K562 (cell line): ENCODE measurements at regions of chr5 and their contacts with region 1.

Region 1: GRCh38 chr5:132456296-132457001 is 34.1 kb downstream of the IRF1 start:
- DNase-seq: no peak
- ATAC-seq: no peak
- H3K4me3 ChIP-seq: no peak overlapping the region
- H3K27ac ChIP-seq: no peak overlapping the region
- H3K4me1 ChIP-seq: peaks cover 16 to 42% of the 10 kb centered on the region in 2 experiments
- H3K27me3 ChIP-seq: no peaks in the 10 kb centered on the region
- CTCF ChIP-seq: no peak
- EP300 ChIP-seq: no peak
- POLR2A ChIP-seq: no peak
- RAD21 ChIP-seq: no peak

Region 2: DNA sequence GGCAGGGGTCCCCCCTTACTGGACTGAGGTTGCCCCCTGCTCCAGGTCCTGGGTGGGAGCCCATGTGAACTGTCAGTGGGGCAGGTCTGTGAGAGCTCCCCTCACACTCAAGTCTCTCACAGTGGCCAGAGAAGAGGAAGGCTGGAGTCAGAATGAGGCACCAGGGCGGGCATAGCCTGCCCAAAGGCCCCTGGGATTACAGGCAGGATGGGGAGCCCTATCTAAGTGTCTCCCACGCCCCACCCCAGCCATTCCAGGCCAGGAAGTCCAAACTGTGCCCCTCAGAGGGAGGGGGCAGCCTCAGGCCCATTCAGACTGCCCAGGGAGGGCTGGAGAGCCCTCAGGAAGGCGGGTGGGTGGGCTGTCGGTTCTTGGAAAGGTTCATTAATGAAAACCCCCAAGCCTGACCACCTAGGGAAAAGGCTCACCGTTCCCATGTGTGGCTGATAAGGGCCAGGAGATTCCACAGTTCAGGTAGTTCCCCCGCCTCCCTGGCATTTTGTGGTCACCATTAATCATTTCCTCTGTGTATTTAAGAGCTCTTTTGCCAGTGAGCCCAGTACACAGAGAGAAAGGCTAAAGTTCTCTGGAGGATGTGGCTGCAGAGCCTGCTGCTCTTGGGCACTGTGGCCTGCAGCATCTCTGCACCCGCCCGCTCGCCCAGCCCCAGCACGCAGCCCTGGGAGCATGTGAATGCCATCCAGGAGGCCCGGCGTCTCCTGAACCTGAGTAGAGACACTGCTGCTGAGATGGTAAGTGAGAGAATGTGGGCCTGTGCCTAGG is 383.0 kb before region 1 on chr5 and contains the start of gene CSF2:
- CTCF ChIA-PET with region 1: no interaction called
- POLR2A ChIA-PET with region 1: no interaction called
- in situ Hi-C with region 1: no loop called
- intact Hi-C with region 1: no loop called
- DNase-seq: no peak
- ATAC-seq: no peak
- H3K4me3 ChIP-seq: no peak within 1 kb of the TSS
- H3K27ac ChIP-seq: no peak within 1 kb of the TSS
- H3K4me1 ChIP-seq: peaks cover 28 to 58% of the 10 kb centered on the region in 2 experiments
- H3K27me3 ChIP-seq: no peaks in the 10 kb centered on the region
- CTCF ChIP-seq: no peak
- EP300 ChIP-seq: no peak
- POLR2A ChIP-seq: no peak
- RAD21 ChIP-seq: no peak
- polyA plus RNA-seq, gene CSF2: not detected

Region 3: DNA sequence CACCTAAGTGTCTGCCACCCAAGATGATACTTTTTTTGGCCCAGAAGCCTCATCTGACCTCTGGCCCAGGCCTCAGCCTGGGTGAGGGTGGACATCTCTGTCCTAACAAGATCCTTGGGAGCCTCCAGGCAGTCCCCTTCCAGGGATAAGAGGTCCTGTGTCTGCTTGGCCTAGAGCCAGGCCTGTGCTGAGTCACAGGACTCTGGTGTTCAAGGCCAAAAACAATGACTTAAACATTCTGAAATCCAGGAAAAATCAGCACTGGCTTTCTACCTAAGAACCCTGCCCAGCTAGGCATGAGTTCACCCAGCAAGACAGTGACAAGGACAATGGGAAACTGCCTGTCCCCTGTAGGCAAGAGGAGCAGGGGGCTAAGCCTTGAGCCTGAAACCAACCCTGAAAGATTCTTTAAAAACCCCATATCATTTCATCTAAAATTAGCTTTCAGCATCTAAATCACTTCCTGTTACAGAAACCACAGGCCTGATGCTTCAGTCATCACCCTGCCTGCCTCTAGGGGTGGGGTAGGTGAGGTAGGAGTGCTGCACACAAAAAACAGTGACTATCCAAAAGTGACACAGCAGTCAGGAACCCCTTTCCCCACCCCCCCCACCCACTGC is 353.0 kb before region 1 on chr5:
- CTCF ChIA-PET with region 1: no interaction called
- POLR2A ChIA-PET with region 1: no interaction called
- in situ Hi-C with region 1: no loop called
- intact Hi-C with region 1: no loop called
- DNase-seq: peak; percentile 75 to 89 (median 83)
- ATAC-seq: peak; percentile 88
- H3K4me3 ChIP-seq: no peak overlapping the region
- H3K27ac ChIP-seq: peak overlapping the region; percentile 75; the same call in 2 of the 3 replicates
- H3K4me1 ChIP-seq: peaks cover 28 to 57% of the 10 kb centered on the region in 2 experiments
- H3K27me3 ChIP-seq: no peaks in the 10 kb centered on the region
- CTCF ChIP-seq: 0 out of 6 replicates have a peak, but pooled peaks of 1 of the 3 experiments have one; percentile 6
- EP300 ChIP-seq: peak; percentile 73
- POLR2A ChIP-seq: no peak
- RAD21 ChIP-seq: 0 out of 4 replicates have a peak, but pooled peaks of 1 of the 2 experiments have one; percentile 5

Region 4: DNA sequence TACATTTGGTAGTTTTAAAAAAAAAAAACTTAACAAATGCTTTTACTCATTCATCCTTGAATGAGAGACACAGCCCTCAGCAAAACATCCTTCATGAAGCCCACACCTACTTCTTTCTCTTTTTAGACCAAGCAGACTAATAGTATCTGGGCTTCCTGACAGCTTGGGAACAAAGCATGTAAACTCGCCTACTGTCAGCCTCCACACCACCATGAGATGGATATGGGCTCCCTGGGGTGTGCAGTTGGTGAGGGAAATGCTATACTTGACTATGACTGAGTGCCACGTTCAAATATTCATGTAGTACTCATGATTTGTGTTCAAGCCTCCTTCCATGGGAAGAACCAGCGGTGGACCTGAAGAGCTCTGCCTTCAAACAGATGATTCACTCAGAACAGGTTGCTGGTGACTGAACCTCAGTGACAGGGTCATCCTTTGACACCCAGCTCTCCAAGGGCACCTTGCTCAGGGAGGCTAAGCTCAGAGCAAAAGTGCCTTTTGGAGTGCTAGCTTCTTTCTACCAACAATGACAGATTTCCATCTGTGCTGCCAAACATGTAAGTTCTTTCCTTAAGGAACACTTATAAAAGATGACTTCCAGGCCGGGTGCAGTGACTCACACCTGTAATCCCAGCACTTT is 50.2 kb before region 1 on chr5:
- CTCF ChIA-PET with region 1: no interaction called
- POLR2A ChIA-PET with region 1: no interaction called
- in situ Hi-C with region 1: no loop called
- intact Hi-C with region 1: no loop called
- DNase-seq: no peak
- ATAC-seq: no peak
- H3K4me3 ChIP-seq: no peak overlapping the region
- H3K27ac ChIP-seq: no peak overlapping the region
- H3K4me1 ChIP-seq: peaks cover 10 to 12% of the 10 kb centered on the region in 2 experiments; a peak in 4 of 5 replicates
- H3K27me3 ChIP-seq: no peaks in the 10 kb centered on the region
- CTCF ChIP-seq: no peak
- EP300 ChIP-seq: no peak
- POLR2A ChIP-seq: no peak
- RAD21 ChIP-seq: no peak

Region 5: GRCh38 chr5:132419502-132420468 is 36.7 kb before region 1 on chr5:
- CTCF ChIA-PET with region 1: interaction called, 3 read pairs
- POLR2A ChIA-PET with region 1: no interaction called
- in situ Hi-C with region 1: loop called (anchors 5 kb)
- intact Hi-C with region 1: no loop called
- DNase-seq: peak; percentile 85 to 89 (median 88)
- ATAC-seq: peak; percentile 81
- H3K4me3 ChIP-seq: no peak overlapping the region
- H3K27ac ChIP-seq: peak overlapping the region; percentile 42; the same call in 2 of the 3 replicates
- H3K4me1 ChIP-seq: peaks cover 22 to 50% of the 10 kb centered on the region in 2 experiments
- H3K27me3 ChIP-seq: no peaks in the 10 kb centered on the region
- CTCF ChIP-seq: peak; percentile 89 to 95 (median 90)
- EP300 ChIP-seq: peak; percentile 8; the same call in 1 of the 2 replicates
- POLR2A ChIP-seq: no peak
- RAD21 ChIP-seq: peak; percentile 94 to 96

Region 6: GRCh38 chr5:132437604-132438266 is 18.7 kb before region 1 on chr5:
- CTCF ChIA-PET with region 1: no interaction called
- POLR2A ChIA-PET with region 1: interaction called, 9 read pairs
- in situ Hi-C with region 1: no loop called
- intact Hi-C with region 1: loop called (anchors 1 kb)
- DNase-seq: peak; percentile 82 to 91 (median 88)
- ATAC-seq: peak; percentile 95
- H3K4me3 ChIP-seq: no peak overlapping the region
- H3K27ac ChIP-seq: peak overlapping the region; percentile 5; the same call in 1 of the 3 replicates
- H3K4me1 ChIP-seq: peaks cover 15 to 29% of the 10 kb centered on the region in 2 experiments; a peak in 4 of 5 replicates
- H3K27me3 ChIP-seq: no peaks in the 10 kb centered on the region
- CTCF ChIP-seq: no peak
- EP300 ChIP-seq: peak; percentile 25; the same call in 1 of the 2 replicates
- POLR2A ChIP-seq: no peak
- RAD21 ChIP-seq: no peak

Region 7: DNA sequence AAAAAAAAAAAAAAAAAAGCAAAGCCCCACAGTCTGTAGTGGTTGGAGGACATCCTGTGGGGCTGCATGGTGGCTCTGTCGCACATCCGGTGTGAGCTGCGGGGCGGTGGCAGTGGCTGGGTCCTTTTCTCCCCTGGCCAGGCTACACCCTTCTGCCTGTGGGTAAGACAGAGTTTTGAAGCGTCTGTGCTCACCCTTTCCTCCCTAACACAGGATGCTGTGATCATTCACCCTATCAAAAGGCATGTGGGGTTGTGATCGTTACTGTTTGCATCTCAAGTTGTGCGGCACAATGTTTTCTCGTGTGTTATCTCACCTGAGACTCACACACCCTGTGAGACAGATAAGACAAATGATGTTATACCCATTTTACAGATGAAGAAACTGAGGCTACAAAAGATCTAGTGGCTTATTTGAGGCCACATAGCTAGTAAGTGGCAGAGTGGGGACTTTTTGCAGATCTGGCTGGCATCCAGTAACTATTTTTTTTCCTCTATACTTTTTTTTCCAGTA is 16.6 kb after region 1 on chr5:
- CTCF ChIA-PET with region 1: no interaction called
- POLR2A ChIA-PET with region 1: interaction called, 25 read pairs
- in situ Hi-C with region 1: no loop called
- intact Hi-C with region 1: no loop called
- DNase-seq: no peak
- ATAC-seq: no peak
- H3K4me3 ChIP-seq: no peak overlapping the region
- H3K27ac ChIP-seq: no peak overlapping the region
- H3K4me1 ChIP-seq: peaks cover 0 to 13% of the 10 kb centered on the region in 2 experiments; a peak in 3 of 5 replicates
- H3K27me3 ChIP-seq: no peaks in the 10 kb centered on the region
- CTCF ChIP-seq: no peak
- EP300 ChIP-seq: no peak
- POLR2A ChIP-seq: no peak
- RAD21 ChIP-seq: no peak

Region 8: DNA sequence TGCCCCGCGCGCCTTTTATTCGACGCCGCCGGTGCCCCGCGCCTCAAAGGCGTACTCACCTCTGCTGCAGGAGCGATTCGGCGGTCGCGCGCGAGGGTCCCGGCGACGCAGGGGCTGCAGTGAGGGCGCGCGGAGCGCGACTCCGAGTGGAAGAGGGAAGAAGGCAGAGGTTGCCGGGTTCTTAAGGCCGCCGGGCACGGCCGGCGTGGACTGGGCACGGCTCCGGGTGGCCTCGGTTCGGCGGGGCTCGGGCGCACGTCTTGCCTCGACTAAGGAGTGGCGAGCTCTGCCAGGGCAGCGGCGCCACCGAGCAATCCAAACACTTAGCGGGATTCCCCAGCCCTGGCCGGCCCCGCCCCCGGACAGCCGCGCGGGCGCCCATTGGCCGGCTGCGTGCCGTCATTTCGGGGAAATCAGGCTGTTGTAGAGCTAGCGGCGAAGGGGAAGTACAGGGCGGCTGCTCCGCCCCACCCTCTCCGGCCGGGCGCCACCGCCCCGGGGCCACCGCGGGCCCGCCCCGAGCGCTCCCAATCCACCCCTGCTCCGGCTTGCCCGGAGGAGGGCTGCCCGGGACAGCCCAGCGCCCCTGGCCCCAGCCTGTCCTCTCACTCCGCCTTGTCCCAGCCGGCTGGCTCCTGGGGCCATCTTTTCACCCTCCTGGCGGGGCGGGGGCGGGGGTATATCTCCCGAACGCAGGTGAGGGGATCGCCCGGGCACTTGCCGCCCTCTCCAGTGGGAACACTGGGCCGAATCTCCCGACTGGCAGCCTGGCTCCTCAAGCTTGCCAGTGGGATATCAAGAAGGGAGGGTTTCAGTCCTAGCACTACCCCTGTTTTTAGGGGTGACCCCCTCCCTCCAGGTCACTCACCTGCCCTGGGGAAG is 34.3 kb after region 1 on chr5 and contains the start of gene IRF1:
- CTCF ChIA-PET with region 1: no interaction called
- POLR2A ChIA-PET with region 1: interaction called, 15 read pairs
- in situ Hi-C with region 1: no loop called
- intact Hi-C with region 1: loop called (anchors 2 kb)
- DNase-seq: peak; percentile 95 to 97 (median 96)
- ATAC-seq: peak; percentile 94
- H3K4me3 ChIP-seq: peak within 1 kb of the TSS; percentile 76
- H3K27ac ChIP-seq: peak within 1 kb of the TSS; percentile 84
- H3K4me1 ChIP-seq: peaks cover 40 to 51% of the 10 kb centered on the region in 2 experiments
- H3K27me3 ChIP-seq: no peaks in the 10 kb centered on the region
- CTCF ChIP-seq: peak in 2 of 3 experiments; percentile 15 to 21; a peak in 2 of 6 replicates
- EP300 ChIP-seq: no peak
- POLR2A ChIP-seq: peak; percentile 85
- RAD21 ChIP-seq: 0 out of 4 replicates have a peak, but pooled peaks of 1 of the 2 experiments have one; percentile 5
- polyA plus RNA-seq, gene IRF1: 1.1 to 1.3 TPM